CD4-positive, alpha-beta memory T cell (primary cell): ENCODE measurements at regions of chr12 and their contacts with region 1.

Region 1: GRCh38 chr12:119667577-119668323 is at the start of gene PRKAB1:
- DNase-seq: peak; percentile 94 to 97 (median 96)
- H3K4me3 ChIP-seq: peak within 1 kb of the TSS; percentile 67 to 98
- H3K4me3 Mint-ChIP-seq: peak within 1 kb of the TSS; percentile 88 to 93 (median 90)
- H3K27ac ChIP-seq: peak within 1 kb of the TSS; percentile 78
- H3K27ac Mint-ChIP-seq: peak within 1 kb of the TSS; percentile 88 to 95 (median 93)
- H3K4me1 ChIP-seq: peaks cover 53% of the 10 kb centered on the region
- H3K4me1 Mint-ChIP-seq: peaks cover 30 to 67% (median 47%) of the 10 kb centered on the region in 4 donors
- H3K27me3 ChIP-seq: no peaks in the 10 kb centered on the region
- H3K27me3 Mint-ChIP-seq: no peaks in the 10 kb centered on the region
- total RNA-seq, gene PRKAB1: 43.4 to 47.6 TPM

Region 2: GRCh38 chr12:119115296-119115905 is 552.3 kb before region 1 on chr12:
- CTCF ChIA-PET with region 1: no interaction called
- POLR2A ChIA-PET with region 1: no interaction called
- intact Hi-C with region 1: loop called (anchors 5 kb)
- DNase-seq: peak in 3 of 5 donors; percentile 5 to 7 (median 5)
- H3K4me3 ChIP-seq: no peak overlapping the region
- H3K4me3 Mint-ChIP-seq: no peak overlapping the region
- H3K27ac ChIP-seq: no peak overlapping the region
- H3K27ac Mint-ChIP-seq: no peak overlapping the region
- H3K4me1 ChIP-seq: no peaks in the 10 kb centered on the region
- H3K4me1 Mint-ChIP-seq: no peaks in the 10 kb centered on the region
- H3K27me3 ChIP-seq: no peaks in the 10 kb centered on the region
- H3K27me3 Mint-ChIP-seq: peaks cover 4 to 7% of the 10 kb centered on the region in 2 donors

Region 3: DNA sequence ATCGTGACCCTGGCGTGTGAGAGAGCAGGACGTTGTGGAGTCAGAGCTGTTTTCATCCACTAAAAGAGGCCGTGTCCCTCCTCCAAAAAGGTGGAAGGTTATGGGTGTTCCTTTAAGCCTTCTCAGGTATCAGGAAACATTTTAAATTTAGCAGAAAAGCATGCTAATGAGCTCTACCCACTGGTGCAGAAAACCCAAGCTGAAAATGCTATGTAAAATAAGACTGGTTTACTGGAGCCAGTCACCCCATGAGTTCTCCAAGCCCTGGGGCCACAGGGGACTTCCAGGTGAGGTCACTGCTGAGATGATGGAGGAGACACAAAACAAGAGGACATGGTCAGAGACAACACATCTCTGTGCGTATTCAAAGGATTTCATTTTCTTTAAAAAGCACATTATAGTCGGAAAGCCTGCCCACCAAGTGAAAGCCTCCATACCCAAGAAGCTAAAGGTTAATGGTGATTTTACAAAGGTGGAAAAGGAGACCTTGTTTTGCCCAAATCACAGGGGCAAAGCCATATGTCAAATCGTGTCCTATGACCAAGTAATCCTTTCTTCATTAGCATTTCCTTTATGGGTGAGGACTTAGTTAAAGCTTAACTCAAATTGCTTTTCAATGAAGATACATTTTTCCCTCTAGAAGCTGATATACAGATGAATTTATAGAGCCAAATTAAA is 14.3 kb after region 1 on chr12:
- CTCF ChIA-PET with region 1: interaction called, 9 read pairs
- POLR2A ChIA-PET with region 1: interaction called, 14 read pairs
- intact Hi-C with region 1: no loop called
- DNase-seq: no peak
- H3K4me3 ChIP-seq: no peak overlapping the region
- H3K4me3 Mint-ChIP-seq: no peak overlapping the region
- H3K27ac ChIP-seq: no peak overlapping the region
- H3K27ac Mint-ChIP-seq: peak overlapping the region; percentile 16 to 88 (median 80)
- H3K4me1 ChIP-seq: peaks cover 8% of the 10 kb centered on the region
- H3K4me1 Mint-ChIP-seq: peaks cover 6 to 11% (median 9%) of the 10 kb centered on the region in 4 donors
- H3K27me3 ChIP-seq: no peaks in the 10 kb centered on the region
- H3K27me3 Mint-ChIP-seq: no peaks in the 10 kb centered on the region